ENCODE measurements at regions of chr16 and their contacts with region 1.

Region 1: DNA sequence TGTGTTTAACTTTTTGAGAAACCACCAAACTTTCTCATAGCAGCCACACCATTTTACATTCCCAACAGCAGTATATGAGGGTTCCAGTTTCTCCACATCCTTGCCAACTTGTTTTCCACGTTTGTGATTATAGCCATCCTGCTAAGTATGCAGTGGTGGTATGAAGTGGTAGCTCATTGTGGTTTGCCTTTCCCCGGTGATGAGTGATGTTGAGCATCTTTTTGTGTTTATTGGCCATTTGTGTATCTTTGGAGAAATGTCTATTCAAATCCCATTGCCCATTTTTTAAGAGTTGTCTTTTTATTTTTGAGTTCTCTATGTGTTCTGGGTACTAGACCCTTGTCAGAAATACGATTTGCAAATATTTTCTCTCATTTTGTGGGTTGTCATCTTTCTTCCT is 17.4 kb downstream of the SF3B3 start:
- DNase-seq: no peak
- ATAC-seq: no peak
- H3K4me3 ChIP-seq: no peak overlapping the region
- H3K4me3 Mint-ChIP-seq: no peak overlapping the region
- H3K27ac ChIP-seq: no peak overlapping the region
- H3K27ac Mint-ChIP-seq: no peak overlapping the region
- H3K4me1 ChIP-seq: peaks cover 4% of the 10 kb centered on the region
- H3K4me1 Mint-ChIP-seq: peaks cover 18% of the 10 kb centered on the region
- H3K27me3 ChIP-seq: no peaks in the 10 kb centered on the region
- H3K27me3 Mint-ChIP-seq: no peaks in the 10 kb centered on the region
- CTCF ChIP-seq: no peak

Region 2: GRCh38 chr16:70395345-70395901 is 145.6 kb before region 1 on chr16:
- CTCF ChIA-PET with region 1: no interaction called
- POLR2A ChIA-PET with region 1: no interaction called
- intact Hi-C with region 1: no loop called
- DNase-seq: peak; percentile 36 to 78 (median 56)
- ATAC-seq: peak; percentile 73
- H3K4me3 ChIP-seq: no peak overlapping the region
- H3K4me3 Mint-ChIP-seq: no peak overlapping the region
- H3K27ac ChIP-seq: no peak overlapping the region
- H3K27ac Mint-ChIP-seq: no peak overlapping the region
- H3K4me1 ChIP-seq: peaks cover 10% of the 10 kb centered on the region
- H3K4me1 Mint-ChIP-seq: no peaks in the 10 kb centered on the region
- H3K27me3 ChIP-seq: no peaks in the 10 kb centered on the region
- H3K27me3 Mint-ChIP-seq: no peaks in the 10 kb centered on the region
- CTCF ChIP-seq: peak; percentile 59

Region 3: DNA sequence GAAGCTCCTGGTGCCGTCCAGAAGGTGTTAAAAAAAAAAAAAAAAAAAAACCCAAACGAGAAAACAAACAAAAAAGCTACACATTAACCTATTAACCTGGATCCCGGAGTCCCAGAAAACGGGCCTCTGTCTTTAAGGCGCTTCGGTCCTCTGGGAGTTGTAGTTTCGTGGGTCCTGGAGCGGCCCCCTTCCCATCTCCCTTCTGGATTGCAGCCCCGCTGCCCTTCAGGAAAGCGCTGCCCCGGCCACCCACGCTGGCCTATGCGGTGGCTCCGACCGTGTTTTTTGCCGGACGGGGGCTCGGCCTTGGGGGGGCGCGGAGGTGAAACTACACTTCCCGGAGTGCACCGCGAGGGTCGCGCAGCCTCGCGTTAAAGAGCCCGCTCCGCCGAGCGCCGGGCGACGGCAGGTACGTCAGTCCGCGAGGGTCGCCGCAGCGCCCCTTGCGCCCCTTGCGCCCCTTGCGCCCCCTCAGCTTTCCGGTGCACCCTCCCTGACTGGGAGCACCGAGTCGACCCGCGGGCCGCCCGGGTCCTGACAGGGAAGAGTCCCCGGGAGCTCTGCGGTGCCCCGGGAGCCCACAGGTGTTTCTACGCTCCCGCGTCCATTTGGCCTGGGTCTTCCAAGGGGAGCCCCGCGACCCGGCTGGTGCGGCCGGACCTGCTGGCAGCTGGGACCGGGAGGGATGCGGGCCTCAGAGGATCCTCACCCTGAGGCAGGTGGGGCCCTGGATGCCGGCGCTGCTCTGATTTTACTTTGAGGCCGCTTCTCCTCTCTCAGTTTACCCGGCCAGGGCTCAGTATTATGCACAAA is 86.6 kb before region 1 on chr16 and contains the start of gene FCSK:
- CTCF ChIA-PET with region 1: no interaction called
- POLR2A ChIA-PET with region 1: no interaction called
- intact Hi-C with region 1: no loop called
- DNase-seq: peak; percentile 50 to 85 (median 59)
- ATAC-seq: peak; percentile 91
- H3K4me3 ChIP-seq: peak within 1 kb of the TSS; percentile 93
- H3K4me3 Mint-ChIP-seq: peak within 1 kb of the TSS; percentile 90
- H3K27ac ChIP-seq: peak within 1 kb of the TSS; percentile 89 to 95
- H3K27ac Mint-ChIP-seq: peak within 1 kb of the TSS; percentile 61
- H3K4me1 ChIP-seq: peaks cover 21% of the 10 kb centered on the region
- H3K4me1 Mint-ChIP-seq: peaks cover 23% of the 10 kb centered on the region
- H3K27me3 ChIP-seq: no peaks in the 10 kb centered on the region
- H3K27me3 Mint-ChIP-seq: no peaks in the 10 kb centered on the region
- CTCF ChIP-seq: no peak
- total RNA-seq, gene FCSK: 21.8 to 25.4 TPM

Region 4: GRCh38 chr16:70561623-70562022 is 20.6 kb after region 1 on chr16:
- CTCF ChIA-PET with region 1: no interaction called
- POLR2A ChIA-PET with region 1: interaction called, 3 read pairs
- intact Hi-C with region 1: loop called in 1 of 2 experiments (anchors 2 kb)
- DNase-seq: no peak
- ATAC-seq: no peak
- H3K4me3 ChIP-seq: no peak overlapping the region
- H3K4me3 Mint-ChIP-seq: no peak overlapping the region
- H3K27ac ChIP-seq: no peak overlapping the region
- H3K27ac Mint-ChIP-seq: no peak overlapping the region
- H3K4me1 ChIP-seq: no peaks in the 10 kb centered on the region
- H3K4me1 Mint-ChIP-seq: peaks cover 7% of the 10 kb centered on the region
- H3K27me3 ChIP-seq: no peaks in the 10 kb centered on the region
- H3K27me3 Mint-ChIP-seq: no peaks in the 10 kb centered on the region
- CTCF ChIP-seq: no peak

Region 5: DNA sequence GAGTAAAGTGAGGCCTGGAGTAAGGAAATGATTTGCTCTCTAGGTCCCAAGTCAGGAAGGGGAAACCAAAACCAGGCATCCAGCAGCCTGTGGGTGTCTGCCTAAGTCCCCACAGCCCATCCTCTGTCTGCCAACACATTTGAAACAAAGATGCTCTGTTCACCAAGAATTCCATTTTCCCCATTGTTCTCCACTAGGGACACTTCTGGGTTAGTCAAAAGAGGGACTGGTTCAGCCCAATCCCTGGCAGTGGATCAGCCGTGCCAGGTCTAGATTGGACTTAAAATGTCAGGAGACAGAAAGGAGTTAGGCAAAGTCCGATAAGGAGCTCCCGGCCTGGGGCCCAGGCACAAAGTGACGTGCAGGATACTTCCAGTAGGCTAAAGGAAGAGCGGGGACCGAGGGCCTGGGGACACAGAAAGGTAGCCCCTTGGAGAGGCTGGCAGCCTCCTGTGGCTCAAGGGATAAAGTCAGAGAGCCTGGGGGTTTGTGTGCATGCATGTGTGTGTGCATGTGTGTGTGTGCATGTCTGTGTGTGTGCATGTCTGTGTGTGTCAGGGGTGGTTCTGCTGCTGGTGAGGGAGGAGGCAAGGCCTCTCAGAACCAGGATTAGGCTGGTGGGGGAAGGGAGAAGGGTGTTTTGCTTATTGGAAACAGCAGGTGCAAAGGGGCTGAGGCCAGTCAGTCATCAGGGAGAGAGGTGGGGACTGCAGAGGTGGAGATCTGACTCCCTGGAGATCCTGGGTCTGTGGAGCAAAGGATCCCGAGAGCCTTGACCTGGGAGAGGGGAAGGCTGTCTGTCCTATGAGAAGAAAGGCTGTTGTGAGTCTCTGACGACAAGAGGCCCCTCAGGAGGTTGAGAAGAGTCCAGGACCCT is 63.7 kb after region 1 on chr16:
- CTCF ChIA-PET with region 1: no interaction called
- POLR2A ChIA-PET with region 1: no interaction called
- intact Hi-C with region 1: no loop called
- DNase-seq: no peak
- ATAC-seq: no peak
- H3K4me3 ChIP-seq: no peak overlapping the region
- H3K4me3 Mint-ChIP-seq: no peak overlapping the region
- H3K27ac ChIP-seq: no peak overlapping the region
- H3K27ac Mint-ChIP-seq: no peak overlapping the region
- H3K4me1 ChIP-seq: no peaks in the 10 kb centered on the region
- H3K4me1 Mint-ChIP-seq: no peaks in the 10 kb centered on the region
- H3K27me3 ChIP-seq: no peaks in the 10 kb centered on the region
- H3K27me3 Mint-ChIP-seq: no peaks in the 10 kb centered on the region
- CTCF ChIP-seq: no peak

Measured in CD4-positive, alpha-beta T cell (primary cell).